ENCODE measurements at regions of chr4 and their contacts with region 1.

Region 1: GRCh38 chr4:124030160-124030561 is 633.6 kb downstream of the SPRY1 start:
- DNase-seq: no peak
- H3K4me3 ChIP-seq: no peak overlapping the region
- H3K27ac ChIP-seq: no peak overlapping the region
- H3K4me1 ChIP-seq: peaks cover 24% of the 10 kb centered on the region
- H3K27me3 ChIP-seq: no peaks in the 10 kb centered on the region
- CTCF ChIP-seq: no peak

Region 2: GRCh38 chr4:123232439-123232838 is 797.7 kb before region 1 on chr4:
- CTCF ChIA-PET with region 1: no interaction called
- POLR2A ChIA-PET with region 1: no interaction called
- intact Hi-C with region 1: no loop called
- DNase-seq: peak; percentile 14
- H3K4me3 ChIP-seq: no peak overlapping the region
- H3K27ac ChIP-seq: no peak overlapping the region
- H3K4me1 ChIP-seq: peaks cover 23% of the 10 kb centered on the region
- H3K27me3 ChIP-seq: no peaks in the 10 kb centered on the region
- CTCF ChIP-seq: no peak

Region 3: DNA sequence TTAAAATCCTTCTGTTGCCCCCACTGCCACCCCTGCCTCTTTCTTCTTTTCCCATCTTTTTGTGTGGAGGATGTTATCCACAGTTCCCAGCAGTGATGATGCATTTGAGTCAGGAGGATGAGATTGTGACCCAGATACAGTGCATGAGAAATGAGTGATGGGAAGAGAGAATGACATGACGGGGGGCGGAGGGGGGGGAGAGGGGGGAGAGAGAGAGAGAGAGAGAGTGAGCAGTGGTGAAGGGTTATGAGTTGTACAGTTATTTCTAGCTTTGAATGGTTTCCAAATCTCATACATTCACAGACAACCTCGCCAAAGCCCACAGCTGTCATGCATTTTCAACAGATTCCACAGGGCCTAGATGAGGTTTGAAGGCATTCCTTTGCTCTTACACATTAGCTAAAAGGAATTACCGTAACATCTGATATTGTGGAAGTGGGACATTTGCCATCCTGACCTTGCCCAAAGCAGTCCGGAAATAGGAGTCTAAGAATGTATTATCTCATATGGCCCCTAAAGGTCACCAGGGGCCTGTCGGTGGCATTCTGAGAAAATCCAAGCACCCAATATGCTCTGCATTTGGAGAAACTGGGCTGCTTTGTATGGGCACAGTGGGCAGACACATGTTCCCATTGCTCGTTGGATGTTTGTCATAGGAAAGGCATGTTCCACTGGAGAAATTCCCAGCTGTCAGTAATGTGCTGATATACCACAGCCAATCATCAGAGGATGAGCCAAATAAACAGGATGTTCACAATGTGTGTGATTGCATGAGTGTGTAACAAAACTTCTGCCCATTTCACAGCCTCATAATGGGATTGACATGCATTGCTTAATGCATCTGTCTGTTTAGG is 197.8 kb before region 1 on chr4:
- CTCF ChIA-PET with region 1: no interaction called
- POLR2A ChIA-PET with region 1: no interaction called
- intact Hi-C with region 1: loop called (anchors 5 kb)
- DNase-seq: peak; percentile 84
- H3K4me3 ChIP-seq: no peak overlapping the region
- H3K27ac ChIP-seq: peak overlapping the region; percentile 61
- H3K4me1 ChIP-seq: peaks cover 39% of the 10 kb centered on the region
- H3K27me3 ChIP-seq: no peaks in the 10 kb centered on the region
- CTCF ChIP-seq: no peak